ENCODE measurements at regions of chr19 and their contacts with region 1.

Region 1: DNA sequence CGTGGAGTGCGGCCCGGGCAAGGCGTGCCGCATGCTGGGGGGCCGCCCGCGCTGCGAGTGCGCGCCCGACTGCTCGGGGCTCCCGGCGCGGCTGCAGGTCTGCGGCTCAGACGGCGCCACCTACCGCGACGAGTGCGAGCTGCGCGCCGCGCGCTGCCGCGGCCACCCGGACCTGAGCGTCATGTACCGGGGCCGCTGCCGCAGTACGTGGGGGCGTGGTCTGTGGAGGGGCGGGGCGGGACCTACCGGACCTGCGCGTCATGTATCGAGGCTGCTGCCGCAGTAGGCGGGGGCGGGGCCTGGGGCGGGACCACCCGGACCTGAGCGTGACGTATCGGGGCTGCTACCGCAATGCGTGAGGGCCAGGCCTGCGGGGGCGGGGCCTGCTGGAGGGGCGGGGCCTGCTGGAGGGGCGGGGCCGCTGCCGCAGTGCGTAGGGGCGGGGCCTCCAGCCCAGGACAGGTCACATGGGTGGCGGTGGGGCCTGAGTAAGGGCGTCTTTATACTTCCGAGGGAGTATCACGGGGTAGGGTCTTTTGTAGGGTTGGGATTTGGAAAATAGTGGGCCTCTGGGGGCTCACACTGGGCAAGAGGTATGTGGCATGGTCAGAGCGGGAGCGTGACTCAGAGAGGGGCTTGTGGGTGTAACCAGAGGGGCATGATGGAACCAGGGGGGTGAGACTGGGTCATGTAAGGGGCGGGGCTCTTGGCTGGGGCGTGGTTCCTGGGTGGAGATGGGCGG is 4.3 kb downstream of the FSTL3 start:
- DNase-seq: peak; percentile 99 to 100 (median 100)
- ATAC-seq: peak; percentile 77
- H3K4me3 ChIP-seq: peak overlapping the region; percentile 52
- H3K4me3 Mint-ChIP-seq: peak overlapping the region; percentile 97
- H3K27ac ChIP-seq: peak overlapping the region; percentile 66 to 82
- H3K27ac Mint-ChIP-seq: peak overlapping the region; percentile 88
- H3K4me1 ChIP-seq: peaks cover 40% of the 10 kb centered on the region
- H3K4me1 Mint-ChIP-seq: peaks cover under 1% of the 10 kb centered on the region
- H3K27me3 ChIP-seq: peaks cover 10 to 11% of the 10 kb centered on the region in 2 experiments
- H3K27me3 Mint-ChIP-seq: peaks cover 6% of the 10 kb centered on the region
- CTCF ChIP-seq: no peak

Region 2: DNA sequence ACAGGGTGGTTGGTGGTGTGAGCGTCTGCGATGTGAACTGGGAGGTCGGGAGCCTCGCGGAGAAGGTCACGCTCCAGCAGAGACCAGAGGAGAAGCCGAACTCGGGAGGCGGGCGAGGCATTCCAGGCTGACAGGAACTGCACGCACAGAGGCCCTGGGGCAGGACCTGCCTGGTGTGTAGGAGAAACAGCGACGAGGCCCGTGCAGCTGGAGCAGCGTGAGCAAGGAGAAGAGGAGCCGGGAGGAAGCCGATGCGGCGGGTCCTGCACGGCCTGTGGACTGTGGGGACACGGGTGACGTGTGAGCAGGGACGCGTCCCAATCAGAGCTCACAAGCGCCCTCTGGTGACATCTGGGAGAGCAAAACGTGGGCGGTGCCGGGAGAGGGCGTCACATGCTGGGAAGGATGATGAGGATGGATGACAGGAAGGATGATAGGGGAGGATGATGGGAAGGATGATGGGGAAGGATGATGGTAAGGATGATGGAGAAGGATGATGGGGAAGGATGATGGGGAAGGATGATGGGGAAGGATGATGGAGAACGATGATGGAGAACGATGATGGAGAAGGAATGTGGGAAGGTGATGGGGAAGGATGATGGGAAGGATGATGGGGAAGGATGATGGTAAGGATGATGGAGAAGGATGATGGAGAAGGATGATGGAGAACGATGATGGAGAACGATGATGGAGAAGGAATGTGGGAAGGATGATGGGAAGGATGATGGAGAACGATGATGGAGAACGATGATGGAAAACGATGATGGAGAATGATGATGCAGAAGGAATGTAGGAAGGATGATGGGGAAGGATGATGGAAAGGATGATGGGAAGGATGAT is 200.2 kb before region 1 on chr19:
- CTCF ChIA-PET with region 1: no interaction called
- POLR2A ChIA-PET with region 1: no interaction called
- intact Hi-C with region 1: no loop called
- DNase-seq: peak in 12 of 14 experiments; percentile 16 to 75 (median 44)
- ATAC-seq: peak; percentile 65
- H3K4me3 ChIP-seq: peak overlapping the region; percentile 5
- H3K4me3 Mint-ChIP-seq: peak overlapping the region; percentile 77
- H3K27ac ChIP-seq: no peak overlapping the region
- H3K27ac Mint-ChIP-seq: peak overlapping the region; percentile 88
- H3K4me1 ChIP-seq: peaks cover 5% of the 10 kb centered on the region
- H3K4me1 Mint-ChIP-seq: peaks cover 9% of the 10 kb centered on the region
- H3K27me3 ChIP-seq: peaks cover under 1 to 6% of the 10 kb centered on the region in 2 experiments
- H3K27me3 Mint-ChIP-seq: peaks cover 15% of the 10 kb centered on the region
- CTCF ChIP-seq: no peak

Region 3: DNA sequence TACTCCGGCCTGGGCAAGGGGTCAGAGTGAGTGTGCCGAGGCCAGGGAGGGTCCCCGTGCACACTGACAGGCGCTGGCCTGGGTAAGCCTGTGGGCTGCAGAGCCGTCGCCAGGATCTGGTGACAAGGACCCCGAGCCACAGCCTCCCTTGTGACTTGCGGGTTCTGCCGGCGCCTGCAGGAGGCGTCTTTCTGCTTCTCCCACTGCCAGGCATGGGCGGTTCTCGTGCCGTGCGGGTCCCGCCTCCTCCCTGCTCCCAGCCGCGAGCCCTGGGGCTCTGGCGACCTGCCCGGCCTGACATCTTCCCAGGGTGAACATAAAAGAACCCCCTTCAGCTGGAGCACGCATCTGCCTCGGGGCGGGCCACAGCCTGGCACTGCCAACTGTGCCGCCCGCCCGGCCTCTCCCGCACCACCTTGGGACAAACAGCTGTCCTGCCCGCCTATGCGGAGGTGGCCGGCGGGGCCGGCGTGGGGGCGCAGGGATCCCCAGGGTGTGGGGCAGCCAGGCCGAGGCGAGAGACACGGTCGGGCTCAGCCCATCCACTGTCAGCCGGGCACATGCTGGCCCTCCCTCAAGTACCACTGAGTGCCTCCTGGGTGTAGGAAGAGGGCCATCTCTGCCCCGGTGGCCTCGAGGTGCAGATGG is 92.2 kb before region 1 on chr19:
- CTCF ChIA-PET with region 1: interaction called, 14 read pairs
- POLR2A ChIA-PET with region 1: no interaction called
- intact Hi-C with region 1: no loop called
- DNase-seq: peak; percentile 32 to 86 (median 60)
- ATAC-seq: peak; percentile 69
- H3K4me3 ChIP-seq: no peak overlapping the region
- H3K4me3 Mint-ChIP-seq: peak overlapping the region; percentile 63
- H3K27ac ChIP-seq: no peak overlapping the region
- H3K27ac Mint-ChIP-seq: no peak overlapping the region
- H3K4me1 ChIP-seq: peaks cover 38% of the 10 kb centered on the region
- H3K4me1 Mint-ChIP-seq: peaks cover 5% of the 10 kb centered on the region
- H3K27me3 ChIP-seq: peaks cover 25 to 30% of the 10 kb centered on the region in 2 experiments
- H3K27me3 Mint-ChIP-seq: peaks cover 23% of the 10 kb centered on the region
- CTCF ChIP-seq: no peak

Region 4: DNA sequence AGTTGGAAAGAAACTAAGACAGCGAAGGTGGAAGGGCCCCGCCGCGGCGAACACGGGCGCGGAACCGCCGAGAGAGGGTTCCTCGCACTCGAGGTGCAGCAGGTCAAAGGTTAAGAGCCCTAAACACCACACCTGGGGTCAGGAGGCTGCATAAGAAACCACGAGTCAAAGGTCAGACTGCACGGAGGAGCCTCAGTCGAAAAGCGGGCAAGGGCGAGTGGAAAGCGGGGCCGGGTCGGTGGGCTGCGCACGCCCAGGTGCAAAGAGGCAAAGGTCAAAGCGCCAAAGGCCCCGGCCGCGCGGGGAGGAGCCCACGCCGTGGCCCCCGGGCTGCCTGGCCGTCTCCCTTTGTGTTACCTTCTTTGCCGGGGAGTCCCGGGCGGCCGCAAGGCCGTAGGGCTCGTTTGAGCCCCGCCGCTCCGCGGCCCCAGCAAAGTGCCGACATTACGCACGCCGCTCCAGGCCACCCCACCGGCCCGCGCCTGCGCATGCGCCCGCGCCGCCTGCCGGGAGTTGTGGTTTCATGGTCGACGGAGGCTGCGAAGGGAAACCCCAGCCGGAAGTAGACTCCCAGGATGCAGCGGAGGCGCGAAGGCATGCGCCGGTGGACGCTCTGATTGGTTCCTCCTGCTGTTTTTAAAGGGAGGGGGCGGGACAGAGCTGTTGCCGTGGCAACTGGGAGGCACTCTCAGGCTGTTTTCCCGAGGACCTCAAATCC is 47.2 kb before region 1 on chr19 and contains the start of gene POLRMT:
- CTCF ChIA-PET with region 1: no interaction called
- POLR2A ChIA-PET with region 1: interaction called, 4 read pairs
- intact Hi-C with region 1: loop called in 1 of 2 experiments (anchors 1 kb)
- DNase-seq: peak; percentile 90 to 99 (median 95)
- ATAC-seq: peak; percentile 97
- H3K4me3 ChIP-seq: peak within 1 kb of the TSS; percentile 90
- H3K4me3 Mint-ChIP-seq: peak within 1 kb of the TSS; percentile 98
- H3K27ac ChIP-seq: peak within 1 kb of the TSS; percentile 52 to 67
- H3K27ac Mint-ChIP-seq: peak within 1 kb of the TSS; percentile 85
- H3K4me1 ChIP-seq: peaks cover 42% of the 10 kb centered on the region
- H3K4me1 Mint-ChIP-seq: peaks cover 35% of the 10 kb centered on the region
- H3K27me3 ChIP-seq: no peaks in the 10 kb centered on the region
- H3K27me3 Mint-ChIP-seq: no peaks in the 10 kb centered on the region
- CTCF ChIP-seq: no peak
- total RNA-seq, gene POLRMT: 54.4 to 56.2 TPM

Region 5: GRCh38 chr19:732148-733069 is 52.0 kb after region 1 on chr19:
- CTCF ChIA-PET with region 1: interaction called, 8 read pairs
- POLR2A ChIA-PET with region 1: no interaction called
- intact Hi-C with region 1: loop called in 1 of 2 experiments (anchors 1 kb)
- DNase-seq: peak in 1 of 14 experiments; percentile 38
- ATAC-seq: no peak
- H3K4me3 ChIP-seq: no peak overlapping the region
- H3K4me3 Mint-ChIP-seq: no peak overlapping the region
- H3K27ac ChIP-seq: no peak overlapping the region
- H3K27ac Mint-ChIP-seq: no peak overlapping the region
- H3K4me1 ChIP-seq: peaks cover 20% of the 10 kb centered on the region
- H3K4me1 Mint-ChIP-seq: peaks cover 6% of the 10 kb centered on the region
- H3K27me3 ChIP-seq: no peaks in the 10 kb centered on the region
- H3K27me3 Mint-ChIP-seq: no peaks in the 10 kb centered on the region
- CTCF ChIP-seq: no peak

Region 6: DNA sequence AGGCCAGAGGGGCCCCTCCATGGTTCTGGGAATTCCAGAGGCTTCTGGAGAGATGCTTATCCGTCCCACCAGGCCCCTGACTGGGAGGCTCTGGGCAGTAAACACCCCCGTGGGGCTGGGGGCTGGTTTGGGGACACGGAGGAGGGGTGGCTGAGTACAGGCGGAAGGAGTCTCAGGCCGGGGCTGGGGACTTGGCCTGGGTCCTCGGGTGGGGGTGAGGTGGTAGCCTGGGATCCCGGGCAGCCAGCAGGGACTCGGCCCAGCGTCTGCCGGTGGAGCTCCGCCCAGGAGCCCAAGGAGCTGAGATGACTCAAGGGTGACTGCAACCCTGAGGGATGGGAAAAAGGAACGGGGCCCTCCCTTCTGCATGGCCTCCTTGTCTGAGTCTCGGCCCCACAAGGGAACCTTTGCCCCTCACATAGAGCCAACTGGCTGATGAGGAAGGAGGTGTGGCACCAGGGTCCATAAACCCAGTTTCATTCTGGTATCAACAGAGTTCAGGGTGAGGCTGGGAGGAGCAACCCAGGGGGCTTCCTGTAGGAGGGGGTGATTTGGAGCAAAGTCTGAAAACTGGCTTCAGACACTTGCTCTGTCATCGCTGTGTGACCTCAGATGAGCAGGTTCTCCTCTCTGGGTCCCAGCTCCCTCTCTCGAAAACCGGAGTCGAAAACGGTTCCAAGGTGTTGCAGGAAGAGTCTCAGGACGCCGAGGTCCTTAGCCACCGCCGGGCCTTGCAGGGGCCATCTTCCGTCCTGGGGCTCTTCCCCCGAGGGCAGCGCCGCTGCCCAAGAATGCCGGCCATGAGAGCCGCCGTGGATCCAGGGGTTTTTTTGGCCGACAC is 71.3 kb after region 1 on chr19:
- CTCF ChIA-PET with region 1: no interaction called
- POLR2A ChIA-PET with region 1: no interaction called
- intact Hi-C with region 1: no loop called
- DNase-seq: peak in 2 of 14 experiments; percentile 27 to 52
- ATAC-seq: no peak
- H3K4me3 ChIP-seq: no peak overlapping the region
- H3K4me3 Mint-ChIP-seq: no peak overlapping the region
- H3K27ac ChIP-seq: no peak overlapping the region
- H3K27ac Mint-ChIP-seq: no peak overlapping the region
- H3K4me1 ChIP-seq: no peaks in the 10 kb centered on the region
- H3K4me1 Mint-ChIP-seq: no peaks in the 10 kb centered on the region
- H3K27me3 ChIP-seq: peaks cover 0 to 4% of the 10 kb centered on the region in 2 experiments
- H3K27me3 Mint-ChIP-seq: no peaks in the 10 kb centered on the region
- CTCF ChIP-seq: no peak

Measured in CD4-positive, alpha-beta T cell (primary cell).